SK-N-SH (cell line): ENCODE measurements at regions of chr12 and their contacts with region 1.

Region 1: GRCh38 chr12:102948941-102949352 is 8.5 kb upstream of the ASCL1 start:
- DNase-seq: peak; percentile 61
- H3K4me3 ChIP-seq: peak overlapping the region in 1 of 2 experiments; percentile 37; a peak in 1 of 4 replicates
- H3K27ac ChIP-seq: no peak overlapping the region
- H3K4me1 ChIP-seq: peaks cover 0 to 7% of the 10 kb centered on the region in 2 experiments; a peak in 1 of 4 replicates
- H3K27me3 ChIP-seq: no peaks in the 10 kb centered on the region
- CTCF ChIP-seq: peak; percentile 86
- EP300 ChIP-seq: no peak
- RAD21 ChIP-seq: peak; percentile 89

Region 2: DNA sequence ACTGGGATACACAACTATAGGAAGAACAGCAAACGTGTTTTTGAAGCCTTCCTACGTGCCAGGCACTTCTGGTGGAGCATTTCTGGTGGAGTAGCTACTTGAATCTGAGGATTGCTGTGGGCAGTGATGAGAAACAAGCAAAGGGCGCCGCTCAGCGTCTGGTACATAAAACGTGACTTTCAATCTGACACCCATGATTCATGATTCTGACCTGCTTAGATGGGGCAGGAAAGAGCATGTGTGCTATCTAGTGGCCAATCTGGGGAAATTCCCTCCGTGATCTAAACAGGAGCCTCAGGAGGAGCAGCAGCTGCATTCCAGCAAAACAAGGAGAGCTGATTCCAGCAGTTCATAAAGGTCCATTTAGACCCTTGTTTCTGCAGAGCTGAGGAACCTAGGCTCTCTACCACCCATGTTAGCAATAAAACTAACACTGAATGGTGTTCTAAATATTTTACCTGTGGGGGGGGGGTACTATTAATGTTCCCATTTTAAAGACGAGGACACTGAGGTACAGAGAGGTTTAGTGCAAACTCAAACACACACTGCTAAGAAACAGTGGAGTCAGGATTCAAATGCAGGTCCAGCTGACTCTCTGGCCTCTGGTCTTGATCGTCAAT is 69.7 kb before region 1 on chr12:
- CTCF ChIA-PET with region 1: interaction called, 14 read pairs
- POLR2A ChIA-PET with region 1: no interaction called
- DNase-seq: peak; percentile 23
- H3K4me3 ChIP-seq: peak overlapping the region in 1 of 2 experiments; percentile 47; a peak in 2 of 4 replicates
- H3K27ac ChIP-seq: no peak overlapping the region
- H3K4me1 ChIP-seq: peaks cover 0 to 2% of the 10 kb centered on the region in 2 experiments; a peak in 1 of 4 replicates
- H3K27me3 ChIP-seq: no peaks in the 10 kb centered on the region
- CTCF ChIP-seq: peak; percentile 62
- EP300 ChIP-seq: no peak
- RAD21 ChIP-seq: peak; percentile 59

Region 3: GRCh38 chr12:102917026-102917787 is 31.7 kb before region 1 on chr12 and contains the start of gene PAH:
- CTCF ChIA-PET with region 1: interaction called, 13 read pairs
- POLR2A ChIA-PET with region 1: no interaction called
- DNase-seq: peak; percentile 14
- H3K4me3 ChIP-seq: peak within 1 kb of the TSS in 1 of 2 experiments; percentile 12; a peak in 1 of 4 replicates
- H3K27ac ChIP-seq: no peak within 1 kb of the TSS
- H3K4me1 ChIP-seq: no peaks in the 10 kb centered on the region; a peak in 1 of 4 replicates
- H3K27me3 ChIP-seq: no peaks in the 10 kb centered on the region
- CTCF ChIP-seq: no peak
- EP300 ChIP-seq: no peak
- RAD21 ChIP-seq: no peak
- polyA plus RNA-seq, gene PAH: not detected in 2 replicates

Region 4: GRCh38 chr12:102990419-102990818 is 41.5 kb after region 1 on chr12:
- CTCF ChIA-PET with region 1: interaction called, 16 read pairs
- POLR2A ChIA-PET with region 1: no interaction called
- DNase-seq: peak; percentile 21
- H3K4me3 ChIP-seq: no peak overlapping the region
- H3K27ac ChIP-seq: no peak overlapping the region
- H3K4me1 ChIP-seq: no peaks in the 10 kb centered on the region; a peak in 1 of 4 replicates
- H3K27me3 ChIP-seq: no peaks in the 10 kb centered on the region
- CTCF ChIP-seq: no peak
- EP300 ChIP-seq: no peak
- RAD21 ChIP-seq: peak; percentile 58

Region 5: DNA sequence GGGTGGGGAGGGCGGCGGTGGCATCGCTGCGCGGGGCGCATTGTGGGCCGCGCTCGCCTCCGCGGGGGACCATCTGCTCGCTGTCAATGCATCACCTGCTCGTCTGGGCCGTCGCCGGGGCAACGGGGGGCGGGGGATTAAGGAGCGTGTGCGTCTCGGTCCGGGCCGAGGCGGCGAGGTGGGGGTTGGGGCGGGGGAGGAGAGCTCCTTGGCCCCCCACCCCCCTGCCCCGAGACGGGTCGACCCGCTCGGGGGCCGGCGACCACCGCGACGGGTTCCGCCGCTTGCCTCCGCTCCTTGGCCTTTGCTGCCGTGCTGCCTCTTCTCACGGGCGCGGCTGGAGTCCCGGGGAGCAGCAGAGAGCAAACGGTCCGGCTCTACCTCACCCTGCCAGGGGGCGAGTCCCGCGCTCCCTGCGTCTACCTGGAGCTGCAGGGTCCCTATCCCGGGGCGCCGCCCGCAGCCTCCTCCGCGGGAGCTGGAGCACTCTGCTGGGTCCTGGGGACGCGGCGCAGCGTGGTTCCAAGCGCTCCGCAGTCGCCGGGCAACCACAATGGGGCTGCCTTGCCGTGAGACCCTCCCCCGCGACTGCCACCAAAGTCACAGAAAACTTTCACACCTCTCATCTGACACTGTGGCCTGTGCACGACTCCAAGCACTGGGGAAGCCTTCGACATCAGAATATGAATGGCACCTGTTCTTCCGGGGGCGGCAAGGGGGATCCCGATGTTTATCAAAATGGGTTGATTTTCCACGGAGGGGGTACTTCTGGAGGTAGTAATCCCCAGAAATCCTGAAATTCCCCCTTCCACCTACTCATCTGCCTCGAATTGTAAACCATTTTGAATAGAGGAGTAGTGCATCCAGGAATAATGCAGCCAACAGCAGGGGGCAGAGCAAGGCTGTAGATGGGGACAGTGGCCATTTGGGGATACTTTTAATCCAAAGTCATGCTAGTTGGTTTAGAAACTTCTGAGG is 546.8 kb after region 1 on chr12 and contains the start of gene C12orf42:
- CTCF ChIA-PET with region 1: interaction called, 13 read pairs
- POLR2A ChIA-PET with region 1: no interaction called
- DNase-seq: peak; percentile 76
- H3K4me3 ChIP-seq: peak within 1 kb of the TSS; percentile 46 to 56
- H3K27ac ChIP-seq: peak within 1 kb of the TSS in 1 of 2 experiments; percentile 58; a peak in 2 of 4 replicates
- H3K4me1 ChIP-seq: peaks cover 0 to 7% of the 10 kb centered on the region in 2 experiments; a peak in 1 of 4 replicates
- H3K27me3 ChIP-seq: no peaks in the 10 kb centered on the region
- CTCF ChIP-seq: peak; percentile 66
- EP300 ChIP-seq: no peak
- RAD21 ChIP-seq: peak; percentile 74
- polyA plus RNA-seq, gene C12orf42: not detected in 2 replicates